GM12878 (cell line): ENCODE measurements at regions of chr2 and their contacts with region 1.

Region 1: GRCh38 chr2:156589381-156590079 is 153.4 kb downstream of the GPD2 start:
- DNase-seq: no peak
- ATAC-seq: peak; percentile 89
- H3K4me3 ChIP-seq: no peak overlapping the region
- H3K27ac ChIP-seq: no peak overlapping the region
- H3K4me1 ChIP-seq: no peaks in the 10 kb centered on the region; the same call in none of the 2 replicates
- H3K27me3 ChIP-seq: no peaks in the 10 kb centered on the region
- CTCF ChIP-seq: peak; percentile 36 to 79 (median 54); a peak in 5 of 6 replicates
- EP300 ChIP-seq: no peak
- POLR2A ChIP-seq: no peak
- RAD21 ChIP-seq: peak; percentile 94

Region 2: DNA sequence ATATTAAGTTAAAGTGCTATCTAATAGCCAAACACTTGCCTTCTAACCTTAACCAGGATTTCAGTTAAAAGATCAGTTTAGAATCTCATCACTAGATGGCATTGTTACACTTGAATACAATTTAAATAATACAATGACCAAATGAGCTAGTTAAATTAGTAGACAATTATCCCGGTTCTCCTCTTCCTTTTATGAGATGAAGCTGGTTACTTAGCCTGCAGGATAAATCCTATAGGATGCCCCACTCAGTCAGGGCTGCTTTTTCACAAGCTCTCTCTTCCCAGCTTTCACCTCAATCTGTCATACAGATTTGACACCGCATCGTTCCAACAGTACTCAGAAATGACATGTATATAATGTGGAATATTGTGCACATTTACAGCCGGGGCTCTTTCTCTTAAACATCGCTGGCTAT is 1212.3 kb before region 1 on chr2:
- CTCF ChIA-PET with region 1: interaction called, 45 read pairs
- POLR2A ChIA-PET with region 1: interaction called, 3 read pairs
- RAD21 ChIA-PET with region 1: interaction called, 12 read pairs
- SMC1A ChIA-PET with region 1: interaction called, 23 read pairs
- in situ Hi-C with region 1: loop called (anchors 25 kb)
- intact Hi-C with region 1: loop called (anchors 5 kb)
- DNase-seq: no peak
- ATAC-seq: peak; percentile 73
- H3K4me3 ChIP-seq: no peak overlapping the region
- H3K27ac ChIP-seq: no peak overlapping the region
- H3K4me1 ChIP-seq: no peaks in the 10 kb centered on the region
- H3K27me3 ChIP-seq: no peaks in the 10 kb centered on the region
- CTCF ChIP-seq: peak in 2 of 3 experiments; percentile 10 to 17; a peak in 3 of 6 replicates
- EP300 ChIP-seq: no peak
- POLR2A ChIP-seq: no peak
- RAD21 ChIP-seq: peak; percentile 50

Region 3: DNA sequence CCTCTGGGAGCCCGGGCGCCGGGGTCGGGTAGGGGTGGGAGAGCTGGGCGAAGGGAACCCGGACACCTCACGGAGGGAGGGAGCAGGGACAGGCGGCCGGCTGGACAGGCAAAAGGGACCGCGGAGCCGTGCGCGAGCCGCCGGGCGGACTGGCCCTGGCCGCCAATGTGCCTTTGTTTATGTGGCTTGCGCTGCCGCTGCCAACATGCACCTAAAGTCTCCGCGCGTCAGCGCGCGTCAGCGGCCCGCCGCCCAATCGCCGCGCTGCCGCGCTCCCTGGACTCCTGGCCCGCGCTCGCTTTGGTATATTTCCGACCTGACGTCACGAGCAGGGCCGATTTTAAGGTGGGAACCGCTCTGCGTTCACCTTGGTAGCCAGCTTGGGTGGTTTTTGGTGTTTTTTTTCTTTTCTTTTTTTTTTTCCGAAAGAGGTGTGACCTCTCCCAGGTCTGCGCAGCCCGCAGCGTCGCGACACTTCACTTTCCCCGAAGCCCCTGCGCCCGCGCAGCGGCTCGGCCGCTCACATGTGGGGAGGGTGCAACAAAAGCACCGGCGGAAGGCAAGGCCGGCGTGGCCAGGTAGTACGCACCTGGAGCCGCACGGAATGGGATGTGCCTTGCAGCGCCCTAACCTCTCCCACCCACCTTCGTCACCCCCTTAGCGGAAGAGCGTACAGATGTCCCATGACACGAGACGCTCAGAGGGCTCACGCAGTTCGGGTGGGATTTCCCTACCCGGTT is 256.8 kb before region 1 on chr2 and contains the start of gene NR4A2:
- CTCF ChIA-PET with region 1: interaction called, 154 read pairs
- POLR2A ChIA-PET with region 1: interaction called, 8 read pairs
- RAD21 ChIA-PET with region 1: interaction called, 205 read pairs
- SMC1A ChIA-PET with region 1: interaction called, 244 read pairs
- in situ Hi-C with region 1: loop called (anchors 25 kb)
- intact Hi-C with region 1: loop called (anchors 1 kb)
- DNase-seq: no peak
- ATAC-seq: peak; percentile 76
- H3K4me3 ChIP-seq: peak within 1 kb of the TSS; percentile 80
- H3K27ac ChIP-seq: peak within 1 kb of the TSS; percentile 85; the same call in 1 of the 2 replicates
- H3K4me1 ChIP-seq: peaks cover 10% of the 10 kb centered on the region
- H3K27me3 ChIP-seq: peaks cover 2 to 13% of the 10 kb centered on the region in 2 experiments
- CTCF ChIP-seq: no peak
- EP300 ChIP-seq: peak; percentile 8 to 49; a peak in 2 of 4 replicates
- POLR2A ChIP-seq: peak; percentile 60
- RAD21 ChIP-seq: no peak
- polyA plus RNA-seq, gene NR4A2: 0.40 to 0.42 TPM

Region 4: DNA sequence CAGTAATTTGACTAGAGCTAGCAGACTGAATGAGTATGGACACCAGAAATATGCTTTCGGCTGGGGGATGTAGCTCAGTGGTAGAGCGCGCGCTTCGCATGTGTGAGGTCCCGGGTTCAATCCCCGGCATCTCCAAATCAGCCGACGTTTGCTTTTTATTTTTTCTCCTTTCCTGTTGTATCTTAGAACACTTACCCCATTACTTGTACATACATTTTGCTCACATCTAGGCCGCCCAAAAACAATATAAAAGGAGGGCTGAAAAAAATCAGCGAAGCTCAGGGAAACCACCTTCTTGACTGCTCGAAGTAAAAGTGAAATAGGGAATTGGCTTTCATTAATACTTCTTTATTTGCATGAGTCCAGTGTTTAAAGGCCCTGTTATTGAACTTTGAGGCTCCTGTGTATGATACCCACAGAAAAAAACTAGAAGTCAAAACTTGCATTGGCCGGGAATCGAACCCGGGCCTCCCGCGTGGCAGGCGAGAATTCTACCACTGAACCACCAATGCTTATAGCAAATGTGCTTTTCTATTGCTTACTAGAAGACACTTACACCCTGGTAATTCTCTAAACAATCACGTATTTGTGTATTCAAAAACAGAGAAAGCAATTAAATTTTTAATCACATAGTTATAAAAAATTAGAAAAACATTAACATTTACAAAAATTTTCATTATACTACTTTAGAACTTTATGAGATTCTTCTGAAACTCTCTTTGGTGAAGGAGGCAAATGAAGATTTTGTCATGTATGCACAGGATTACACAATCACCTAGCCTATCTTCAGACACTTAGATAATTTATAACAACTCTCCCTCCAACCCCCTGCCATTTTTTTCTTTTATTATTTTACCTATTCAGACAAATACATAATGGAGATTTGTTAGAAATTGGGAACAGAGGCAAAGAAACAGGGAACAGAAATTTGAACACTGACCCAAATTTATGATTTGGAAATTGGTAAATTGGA is 188.5 kb before region 1 on chr2:
- CTCF ChIA-PET with region 1: interaction called, 6 read pairs
- POLR2A ChIA-PET with region 1: no interaction called
- RAD21 ChIA-PET with region 1: interaction called, 14 read pairs
- SMC1A ChIA-PET with region 1: interaction called, 11 read pairs
- in situ Hi-C with region 1: no loop called
- intact Hi-C with region 1: loop called (anchors 1 kb)
- DNase-seq: peak; percentile 82
- ATAC-seq: peak; percentile 78
- H3K4me3 ChIP-seq: peak overlapping the region; percentile 70
- H3K27ac ChIP-seq: peak overlapping the region; percentile 86
- H3K4me1 ChIP-seq: peaks cover 17% of the 10 kb centered on the region
- H3K27me3 ChIP-seq: no peaks in the 10 kb centered on the region
- CTCF ChIP-seq: no peak
- EP300 ChIP-seq: peak in 1 of 2 experiments; percentile 83; a peak in 1 of 4 replicates
- POLR2A ChIP-seq: no peak
- RAD21 ChIP-seq: no peak

Region 5: DNA sequence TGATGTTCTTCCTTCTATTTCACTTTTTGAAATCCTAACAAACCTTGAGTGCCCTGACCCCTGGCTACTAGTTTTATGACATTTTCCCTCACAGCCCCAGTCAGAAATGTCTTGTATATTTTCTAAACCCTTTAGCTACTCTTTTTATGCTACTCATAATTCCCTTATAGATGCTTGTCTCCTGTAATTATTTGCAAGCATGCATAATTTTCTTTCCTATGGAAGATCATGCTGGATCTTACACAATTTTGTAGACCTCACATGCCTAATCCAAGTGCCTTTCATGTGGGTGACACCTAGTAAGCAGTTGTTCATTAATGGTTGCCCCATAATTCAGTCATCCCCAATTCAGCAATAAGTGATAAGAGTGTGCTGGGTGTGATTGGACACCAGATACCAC is 146.4 kb before region 1 on chr2:
- CTCF ChIA-PET with region 1: interaction called, 6 read pairs
- POLR2A ChIA-PET with region 1: no interaction called
- RAD21 ChIA-PET with region 1: interaction called, 4 read pairs
- SMC1A ChIA-PET with region 1: interaction called, 28 read pairs
- in situ Hi-C with region 1: no loop called
- intact Hi-C with region 1: no loop called
- DNase-seq: no peak
- ATAC-seq: no peak
- H3K4me3 ChIP-seq: no peak overlapping the region
- H3K27ac ChIP-seq: no peak overlapping the region
- H3K4me1 ChIP-seq: peaks cover 18% of the 10 kb centered on the region
- H3K27me3 ChIP-seq: no peaks in the 10 kb centered on the region
- CTCF ChIP-seq: no peak
- EP300 ChIP-seq: no peak
- POLR2A ChIP-seq: no peak
- RAD21 ChIP-seq: no peak

Region 6: GRCh38 chr2:156526950-156527636 is 62.4 kb before region 1 on chr2:
- CTCF ChIA-PET with region 1: interaction called, 10 read pairs
- POLR2A ChIA-PET with region 1: no interaction called
- RAD21 ChIA-PET with region 1: interaction called, 4 read pairs
- SMC1A ChIA-PET with region 1: interaction called, 9 read pairs
- in situ Hi-C with region 1: no loop called
- intact Hi-C with region 1: no loop called
- DNase-seq: no peak
- ATAC-seq: peak; percentile 94
- H3K4me3 ChIP-seq: no peak overlapping the region
- H3K27ac ChIP-seq: peak overlapping the region; percentile 81
- H3K4me1 ChIP-seq: peaks cover 16% of the 10 kb centered on the region
- H3K27me3 ChIP-seq: no peaks in the 10 kb centered on the region
- CTCF ChIP-seq: no peak
- EP300 ChIP-seq: peak; percentile 96 to 99
- POLR2A ChIP-seq: no peak
- RAD21 ChIP-seq: no peak

Region 7: DNA sequence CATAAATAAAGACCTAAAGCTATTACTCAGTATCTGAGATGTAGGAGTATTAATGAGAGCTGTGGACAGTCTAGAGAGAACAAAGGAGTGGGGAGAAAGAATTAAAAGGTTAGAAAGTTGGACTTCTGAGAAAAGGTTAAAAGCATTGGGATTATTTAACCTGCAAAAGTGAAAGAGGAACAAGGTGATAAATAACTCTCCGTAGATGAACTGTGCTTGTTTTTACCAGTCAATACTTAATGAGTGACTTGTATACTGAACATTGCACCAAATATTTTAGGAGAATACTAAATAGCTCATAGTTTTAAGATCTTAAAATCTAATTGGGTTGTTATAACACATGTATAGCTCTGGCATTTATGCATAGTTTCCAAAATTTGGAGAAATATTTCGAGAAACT is 15.8 kb before region 1 on chr2:
- CTCF ChIA-PET with region 1: interaction called, 21 read pairs
- POLR2A ChIA-PET with region 1: no interaction called
- RAD21 ChIA-PET with region 1: interaction called, 10 read pairs
- SMC1A ChIA-PET with region 1: interaction called, 39 read pairs
- in situ Hi-C with region 1: no loop called
- intact Hi-C with region 1: no loop called
- DNase-seq: no peak
- ATAC-seq: peak; percentile 85
- H3K4me3 ChIP-seq: no peak overlapping the region
- H3K27ac ChIP-seq: peak overlapping the region; percentile 18; the same call in 1 of the 2 replicates
- H3K4me1 ChIP-seq: peaks cover 10% of the 10 kb centered on the region; the same call in 1 of the 2 replicates
- H3K27me3 ChIP-seq: no peaks in the 10 kb centered on the region
- CTCF ChIP-seq: no peak
- EP300 ChIP-seq: no peak
- POLR2A ChIP-seq: no peak
- RAD21 ChIP-seq: no peak

Region 8: DNA sequence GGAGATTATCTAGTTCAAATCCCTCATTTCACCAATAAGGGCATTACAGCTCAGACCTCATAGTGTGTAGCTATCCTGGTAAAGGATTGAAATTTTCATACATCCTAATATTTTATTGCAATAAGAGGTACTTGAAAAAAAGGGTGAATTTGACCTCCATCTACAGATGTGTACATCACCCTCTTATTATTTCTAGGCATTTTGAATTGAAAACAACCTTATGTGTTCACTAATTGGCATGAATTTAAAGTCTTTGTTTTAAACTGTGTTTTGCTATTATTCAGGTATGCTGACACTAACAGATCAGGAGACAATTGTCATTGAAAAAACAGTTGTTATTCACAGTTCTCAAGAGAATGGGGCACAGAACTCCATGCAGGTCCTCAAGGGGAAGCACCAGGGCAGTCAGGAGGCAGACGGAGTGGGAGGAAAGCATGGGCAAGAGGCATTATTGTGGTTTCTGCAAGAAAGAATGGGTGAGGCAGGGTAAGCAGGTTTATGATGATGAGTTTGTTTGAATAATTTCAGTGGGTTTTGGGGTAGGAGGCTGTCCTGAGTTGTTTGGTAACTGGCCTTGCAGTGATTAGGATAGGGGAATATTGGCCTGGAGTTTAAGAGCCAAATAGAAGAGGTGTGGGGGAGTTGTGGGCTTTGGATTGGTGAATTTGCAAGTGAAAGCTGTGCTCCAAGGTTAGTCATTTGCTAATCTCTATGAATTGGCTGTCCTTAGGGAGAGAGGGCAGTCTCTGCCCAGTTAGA is 41.2 kb after region 1 on chr2:
- CTCF ChIA-PET with region 1: no interaction called
- POLR2A ChIA-PET with region 1: no interaction called
- RAD21 ChIA-PET with region 1: no interaction called
- SMC1A ChIA-PET with region 1: no interaction called
- in situ Hi-C with region 1: no loop called
- intact Hi-C with region 1: no loop called
- DNase-seq: no peak
- ATAC-seq: no peak
- H3K4me3 ChIP-seq: no peak overlapping the region
- H3K27ac ChIP-seq: no peak overlapping the region
- H3K4me1 ChIP-seq: no peaks in the 10 kb centered on the region
- H3K27me3 ChIP-seq: no peaks in the 10 kb centered on the region
- CTCF ChIP-seq: no peak
- EP300 ChIP-seq: no peak
- POLR2A ChIP-seq: no peak
- RAD21 ChIP-seq: no peak